ENCODE measurements at regions of chr1 and their contacts with region 1.

Region 1: DNA sequence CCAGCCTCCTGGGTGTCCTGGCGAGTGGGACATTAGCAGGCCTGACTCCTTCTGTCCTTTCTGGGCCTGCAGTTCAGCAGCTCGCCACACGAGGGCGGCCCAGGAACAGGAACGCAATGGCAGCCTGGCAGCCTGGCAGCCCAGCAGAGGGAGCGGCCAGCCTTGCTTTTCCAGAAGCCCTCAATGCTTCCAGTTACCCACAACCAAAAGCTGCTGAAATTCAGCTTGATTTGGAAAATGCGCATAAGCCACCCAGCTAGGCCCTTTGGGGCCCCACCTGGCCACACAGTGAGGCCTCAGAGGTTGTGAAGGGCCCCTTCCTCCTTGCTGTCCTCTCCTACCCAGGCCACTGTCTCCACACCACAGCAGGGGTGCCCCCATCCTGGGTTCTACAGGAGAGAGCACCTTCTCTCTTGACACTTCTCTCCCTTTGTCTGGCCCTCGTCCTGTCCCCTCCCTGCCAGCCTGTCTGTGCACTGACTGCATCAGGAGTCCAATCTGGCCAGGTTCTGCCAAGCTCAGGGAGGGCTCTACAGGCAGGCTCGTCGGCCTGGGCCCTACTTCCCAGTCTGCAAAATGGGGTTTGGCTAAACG is 103.4 kb upstream of the VAMP3 start:
- DNase-seq: no peak
- H3K4me3 ChIP-seq: no peak overlapping the region
- CTCF ChIP-seq: peak; percentile 100

Region 2: GRCh38 chr1:7680207-7680954 is 12.7 kb after region 1 on chr1:
- CTCF ChIA-PET with region 1: interaction called, 205 read pairs
- POLR2A ChIA-PET with region 1: interaction called, 4 read pairs
- DNase-seq: no peak
- H3K4me3 ChIP-seq: peak overlapping the region; percentile 60
- CTCF ChIP-seq: no peak

Region 3: GRCh38 chr1:7704214-7705047 is 36.7 kb after region 1 on chr1:
- CTCF ChIA-PET with region 1: interaction called, 52 read pairs
- POLR2A ChIA-PET with region 1: no interaction called
- DNase-seq: peak; percentile 5
- H3K4me3 ChIP-seq: peak overlapping the region; percentile 23
- CTCF ChIP-seq: no peak

Region 4: GRCh38 chr1:7743346-7743745 is 75.6 kb after region 1 on chr1:
- CTCF ChIA-PET with region 1: interaction called, 1,214 read pairs
- POLR2A ChIA-PET with region 1: no interaction called
- DNase-seq: no peak
- H3K4me3 ChIP-seq: no peak overlapping the region
- CTCF ChIP-seq: no peak

Region 5: GRCh38 chr1:7770997-7771822 is 103.5 kb after region 1 on chr1 and contains the start of gene VAMP3:
- CTCF ChIA-PET with region 1: interaction called, 63 read pairs
- POLR2A ChIA-PET with region 1: no interaction called
- DNase-seq: no peak
- H3K4me3 ChIP-seq: peak within 1 kb of the TSS; percentile 89
- CTCF ChIP-seq: no peak

Region 6: DNA sequence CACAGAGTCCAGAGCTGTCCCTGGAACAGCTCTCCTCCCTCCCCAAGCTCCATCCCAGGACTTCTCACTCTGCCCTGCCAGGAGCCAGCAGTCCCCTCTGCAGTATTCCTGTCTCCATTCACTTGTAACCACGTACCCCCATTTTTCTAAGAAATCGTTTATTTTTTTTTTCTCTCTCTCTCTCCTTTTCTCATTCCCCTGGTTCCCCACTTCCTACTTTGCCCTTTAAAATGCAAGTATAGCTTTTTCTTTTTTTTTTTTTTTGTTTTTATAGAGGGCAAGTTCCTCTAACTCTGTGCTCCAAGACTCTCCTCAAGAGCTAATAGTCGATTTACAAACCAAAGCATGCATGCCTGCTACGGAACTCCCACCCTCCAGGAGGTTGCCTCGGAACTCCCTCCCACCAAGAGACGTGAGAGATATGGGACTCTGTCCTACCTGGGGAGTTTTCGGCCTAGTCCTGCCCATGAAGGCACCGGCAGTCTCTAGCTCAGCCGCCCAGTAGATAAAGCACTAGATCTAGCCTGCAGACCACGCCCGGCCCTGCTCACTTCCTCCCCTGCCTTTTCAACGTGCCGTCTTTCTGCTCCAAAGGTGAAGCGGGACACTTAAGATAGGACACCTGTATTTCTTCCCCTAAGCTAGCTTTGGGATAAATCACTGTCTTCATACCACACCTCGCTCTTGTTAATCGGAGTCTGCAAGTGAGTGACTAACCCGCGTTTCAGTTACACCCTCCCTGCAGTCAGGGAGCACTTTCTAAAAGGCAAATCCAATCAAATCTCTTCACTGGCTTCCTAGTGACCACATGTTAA is 245.2 kb after region 1 on chr1:
- CTCF ChIA-PET with region 1: interaction called, 13 read pairs
- POLR2A ChIA-PET with region 1: no interaction called
- DNase-seq: no peak
- H3K4me3 ChIP-seq: no peak overlapping the region
- CTCF ChIP-seq: no peak

Region 7: GRCh38 chr1:8314346-8315280 is 646.9 kb after region 1 on chr1:
- CTCF ChIA-PET with region 1: interaction called, 12 read pairs
- POLR2A ChIA-PET with region 1: no interaction called
- DNase-seq: peak; percentile 24
- H3K4me3 ChIP-seq: no peak overlapping the region
- CTCF ChIP-seq: peak; percentile 94

Measured in AG04449 (cell line).